IMR-90 (cell line): ENCODE measurements at regions of chr4 and their contacts with region 1.

Region 1: GRCh38 chr4:185395956-185396723 is 416 bp upstream of the LRP2BP start:
- DNase-seq: peak; percentile 97
- ATAC-seq: peak; percentile 97
- H3K4me3 ChIP-seq: peak overlapping the region; percentile 71
- H3K27ac ChIP-seq: peak overlapping the region; percentile 66
- H3K4me1 ChIP-seq: no peaks in the 10 kb centered on the region; the same call in 1 of the 2 replicates
- H3K27me3 ChIP-seq: no peaks in the 10 kb centered on the region
- CTCF ChIP-seq: no peak
- POLR2A ChIP-seq: peak; percentile 49
- RAD21 ChIP-seq: peak; percentile 6; the same call in 1 of the 2 replicates

Region 2: DNA sequence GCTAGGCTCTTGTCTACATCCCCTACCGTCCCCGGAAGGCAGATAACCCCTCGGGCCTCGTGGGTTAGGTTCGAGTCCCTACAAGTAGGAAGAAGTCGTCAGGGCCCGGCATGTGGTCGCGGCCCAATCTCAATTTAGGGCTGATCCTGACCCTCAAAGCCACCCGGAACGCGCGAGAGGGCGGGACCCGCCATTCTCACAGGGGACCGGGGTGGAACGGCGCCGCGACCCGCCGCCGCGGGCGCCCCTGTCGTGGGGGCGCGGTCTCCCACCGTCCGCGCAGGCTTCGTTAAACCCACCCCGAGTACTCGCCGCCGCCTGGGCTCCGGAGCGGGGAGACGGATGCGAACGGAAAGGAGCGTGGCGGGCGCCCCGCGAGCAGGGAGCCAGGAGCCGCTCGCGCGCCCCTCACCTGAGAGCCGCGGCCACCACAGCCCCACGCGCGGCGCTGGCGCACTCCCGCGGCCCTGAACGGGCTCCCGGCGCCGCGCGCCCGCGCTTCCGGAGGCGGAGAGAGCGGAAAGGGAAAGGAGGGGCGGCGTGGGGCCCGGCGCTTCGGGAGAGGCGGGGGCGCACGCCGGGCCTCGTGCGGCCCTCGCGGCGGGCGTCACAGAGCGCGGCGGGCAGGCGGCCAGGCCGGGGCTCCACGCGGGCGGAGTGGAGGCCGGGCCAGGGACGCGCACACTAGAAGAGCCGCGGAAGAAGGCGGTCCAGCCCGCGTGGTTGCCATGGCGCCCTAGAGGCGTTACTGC is 192.5 kb before region 1 on chr4 and contains the start of gene CFAP97:
- CTCF ChIA-PET with region 1: no interaction called
- POLR2A ChIA-PET with region 1: no interaction called
- dilution Hi-C with region 1: no loop called
- in situ Hi-C with region 1: loop called (anchors 5 kb)
- intact Hi-C with region 1: no loop called
- DNase-seq: peak; percentile 87
- ATAC-seq: peak; percentile 95
- H3K4me3 ChIP-seq: peak within 1 kb of the TSS; percentile 62
- H3K27ac ChIP-seq: peak within 1 kb of the TSS; percentile 22
- H3K4me1 ChIP-seq: peaks cover 5% of the 10 kb centered on the region
- H3K27me3 ChIP-seq: no peaks in the 10 kb centered on the region
- CTCF ChIP-seq: no peak
- POLR2A ChIP-seq: peak; percentile 80
- RAD21 ChIP-seq: no peak
- total RNA-seq, gene CFAP97: 16.0 and 33.9 TPM in 2 replicates

Region 3: DNA sequence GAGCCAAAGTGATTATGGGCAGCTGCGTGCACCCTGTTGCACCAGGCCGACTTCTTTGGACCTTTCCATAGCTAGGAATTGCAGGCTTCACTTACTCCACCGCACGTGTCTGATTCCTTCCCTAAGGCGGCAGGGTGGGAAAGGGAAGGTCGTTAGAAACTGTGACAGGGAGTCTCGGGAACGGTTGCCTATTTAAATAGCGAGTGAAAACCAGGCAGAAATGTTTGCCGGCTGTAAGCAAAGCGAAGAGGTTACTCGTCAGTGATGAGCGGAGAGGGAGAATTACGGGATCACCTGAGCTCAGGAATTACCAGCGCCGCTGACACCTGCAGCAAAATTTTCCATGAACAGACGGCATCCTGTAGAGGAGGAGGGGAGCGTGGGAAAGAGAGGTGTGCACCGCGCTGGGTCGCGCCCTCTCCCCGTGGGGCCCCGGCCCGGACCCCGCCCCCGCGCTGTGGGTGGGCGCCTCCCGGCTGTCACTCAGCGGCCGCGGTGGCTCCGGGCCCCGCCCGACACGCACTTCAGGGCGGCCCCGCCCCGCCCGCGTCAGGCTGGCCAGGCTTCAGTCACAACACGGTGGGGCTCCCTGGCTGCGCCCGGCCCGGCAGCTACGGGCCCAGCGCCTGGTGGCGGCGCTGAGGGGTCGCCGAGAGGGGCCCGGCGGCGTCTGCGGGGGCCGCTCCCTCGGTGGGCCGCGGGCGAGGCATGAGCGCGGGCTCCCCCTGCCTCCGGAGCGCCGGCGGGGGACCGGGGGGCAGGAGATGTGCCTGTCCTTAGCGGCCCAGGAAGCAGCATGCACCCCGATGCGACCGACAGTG is 186.9 kb before region 1 on chr4 and contains the start of gene SNX25:
- CTCF ChIA-PET with region 1: no interaction called
- POLR2A ChIA-PET with region 1: no interaction called
- dilution Hi-C with region 1: no loop called
- in situ Hi-C with region 1: loop called (anchors 5 kb)
- intact Hi-C with region 1: loop called (anchors 1 kb)
- DNase-seq: peak; percentile 65
- ATAC-seq: peak; percentile 88
- H3K4me3 ChIP-seq: peak within 1 kb of the TSS; percentile 93
- H3K27ac ChIP-seq: peak within 1 kb of the TSS; percentile 73
- H3K4me1 ChIP-seq: peaks cover 8% of the 10 kb centered on the region
- H3K27me3 ChIP-seq: no peaks in the 10 kb centered on the region
- CTCF ChIP-seq: peak; percentile 23; the same call in 1 of the 2 replicates
- POLR2A ChIP-seq: peak; percentile 78
- RAD21 ChIP-seq: peak; percentile 29
- total RNA-seq, gene SNX25: 28.3 and 30.0 TPM in 2 replicates

Region 4: DNA sequence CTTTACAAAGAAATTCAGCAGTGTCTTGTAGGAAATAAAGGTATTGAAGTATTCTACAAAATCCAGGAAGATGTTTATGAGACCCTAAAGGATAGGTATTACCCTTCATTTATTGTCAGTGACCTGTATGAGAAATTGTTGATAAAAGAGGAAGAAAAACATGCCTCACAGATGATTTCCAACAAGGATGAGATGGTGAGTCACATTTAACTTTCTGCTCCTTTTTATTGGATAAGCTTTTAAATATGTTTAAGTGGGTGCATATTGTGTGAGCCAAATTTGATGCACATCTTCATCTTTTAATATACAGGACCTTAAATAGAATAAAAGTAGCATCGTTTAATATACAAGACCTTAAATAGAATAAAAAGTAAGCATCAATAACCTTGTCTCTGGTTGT is 72.5 kb before region 1 on chr4:
- CTCF ChIA-PET with region 1: no interaction called
- POLR2A ChIA-PET with region 1: no interaction called
- dilution Hi-C with region 1: no loop called
- in situ Hi-C with region 1: no loop called
- intact Hi-C with region 1: loop called (anchors 1 kb)
- DNase-seq: peak; percentile 53
- ATAC-seq: no peak
- H3K4me3 ChIP-seq: no peak overlapping the region
- H3K27ac ChIP-seq: no peak overlapping the region
- H3K4me1 ChIP-seq: peaks cover 2% of the 10 kb centered on the region; the same call in 1 of the 2 replicates
- H3K27me3 ChIP-seq: no peaks in the 10 kb centered on the region
- CTCF ChIP-seq: no peak
- POLR2A ChIP-seq: no peak
- RAD21 ChIP-seq: no peak

Region 5: GRCh38 chr4:185359767-185360446 is 36.2 kb before region 1 on chr4:
- CTCF ChIA-PET with region 1: no interaction called
- POLR2A ChIA-PET with region 1: no interaction called
- dilution Hi-C with region 1: no loop called
- in situ Hi-C with region 1: no loop called
- intact Hi-C with region 1: no loop called
- DNase-seq: peak; percentile 80
- ATAC-seq: no peak; the same call in 1 of the 2 replicates
- H3K4me3 ChIP-seq: no peak overlapping the region
- H3K27ac ChIP-seq: no peak overlapping the region
- H3K4me1 ChIP-seq: peaks cover 5% of the 10 kb centered on the region
- H3K27me3 ChIP-seq: no peaks in the 10 kb centered on the region
- CTCF ChIP-seq: no peak
- POLR2A ChIP-seq: no peak
- RAD21 ChIP-seq: no peak